IMR-90 (cell line): ENCODE measurements at regions of chr14 and their contacts with region 1.

Region 1: DNA sequence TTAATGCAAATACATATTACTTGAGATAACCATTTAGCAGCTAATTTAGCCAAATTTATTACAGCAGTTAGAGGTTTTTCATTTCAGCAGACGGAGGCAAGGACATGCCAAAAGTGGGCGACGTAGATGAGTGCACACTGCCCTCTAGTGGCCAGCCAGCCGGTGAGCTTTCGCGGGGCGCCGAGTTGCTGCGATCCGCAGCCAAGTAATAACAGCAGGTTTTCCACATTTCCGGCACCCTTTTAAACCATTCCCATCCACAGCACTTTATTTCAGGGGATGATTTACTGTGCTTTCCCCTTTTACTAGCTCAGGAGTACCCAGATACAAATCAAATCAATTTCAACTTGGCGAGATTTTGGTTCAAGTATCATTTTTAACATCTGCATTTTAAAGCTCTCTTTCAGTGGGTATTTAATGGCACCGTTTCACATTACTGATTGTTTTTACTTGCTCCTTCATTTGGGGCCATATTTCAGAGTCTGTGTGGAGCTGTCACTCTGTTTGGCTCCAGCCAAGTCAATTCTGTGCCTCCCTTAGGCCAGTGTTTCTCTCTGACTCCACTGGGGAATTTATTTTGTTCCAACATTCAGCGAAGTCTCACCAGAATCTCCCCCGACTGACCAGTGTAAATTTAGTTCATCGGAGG is 158.0 kb downstream of the EGLN3 start:
- DNase-seq: peak; percentile 66
- ATAC-seq: peak; percentile 87
- H3K4me3 ChIP-seq: no peak overlapping the region
- H3K27ac ChIP-seq: no peak overlapping the region
- H3K4me1 ChIP-seq: no peaks in the 10 kb centered on the region
- H3K27me3 ChIP-seq: no peaks in the 10 kb centered on the region; the same call in 1 of the 2 replicates
- CTCF ChIP-seq: peak; percentile 85
- POLR2A ChIP-seq: no peak
- RAD21 ChIP-seq: peak; percentile 80

Region 2: GRCh38 chr14:32588448-32589320 is 1204.2 kb before region 1 on chr14:
- CTCF ChIA-PET with region 1: interaction called, 9 read pairs
- POLR2A ChIA-PET with region 1: no interaction called
- dilution Hi-C with region 1: loop called (anchors 25 kb)
- in situ Hi-C with region 1: no loop called
- intact Hi-C with region 1: loop called (anchors 1 kb)
- DNase-seq: peak; percentile 65
- ATAC-seq: peak; percentile 81
- H3K4me3 ChIP-seq: no peak overlapping the region
- H3K27ac ChIP-seq: no peak overlapping the region
- H3K4me1 ChIP-seq: peaks cover 5% of the 10 kb centered on the region
- H3K27me3 ChIP-seq: no peaks in the 10 kb centered on the region
- CTCF ChIP-seq: peak; percentile 87
- POLR2A ChIP-seq: peak; percentile 45; the same call in 1 of the 2 replicates
- RAD21 ChIP-seq: peak; percentile 91

Region 3: GRCh38 chr14:32710731-32711680 is 1081.8 kb before region 1 on chr14:
- CTCF ChIA-PET with region 1: interaction called, 3 read pairs
- POLR2A ChIA-PET with region 1: interaction called, 7 read pairs
- dilution Hi-C with region 1: no loop called
- in situ Hi-C with region 1: no loop called
- intact Hi-C with region 1: loop called (anchors 2 kb)
- DNase-seq: peak; percentile 14
- ATAC-seq: peak; percentile 44; the same call in 1 of the 2 replicates
- H3K4me3 ChIP-seq: peak overlapping the region; percentile 32; the same call in 1 of the 2 replicates
- H3K27ac ChIP-seq: no peak overlapping the region
- H3K4me1 ChIP-seq: no peaks in the 10 kb centered on the region; the same call in 1 of the 2 replicates
- H3K27me3 ChIP-seq: no peaks in the 10 kb centered on the region
- CTCF ChIP-seq: peak; percentile 42
- POLR2A ChIP-seq: no peak
- RAD21 ChIP-seq: peak; percentile 41

Region 4: DNA sequence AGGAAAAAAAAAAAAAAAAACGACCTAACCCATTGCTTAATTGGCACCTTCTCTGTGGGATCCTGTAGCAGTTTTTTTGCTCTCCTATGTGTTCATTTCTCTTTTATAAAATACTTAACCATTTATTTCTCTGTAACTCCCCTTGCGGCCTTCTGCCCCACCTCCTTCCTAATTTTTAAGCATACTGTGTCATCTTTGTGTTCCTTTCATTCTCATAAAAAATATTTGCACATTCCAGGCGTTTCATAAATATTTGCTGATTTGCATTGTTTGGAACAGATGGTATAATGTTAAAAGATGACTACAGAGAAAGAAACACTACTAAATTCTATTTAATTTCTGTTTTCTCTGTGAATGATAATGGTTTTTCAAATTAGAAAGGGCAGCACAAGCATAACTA is 776.2 kb before region 1 on chr14:
- CTCF ChIA-PET with region 1: no interaction called
- POLR2A ChIA-PET with region 1: no interaction called
- dilution Hi-C with region 1: no loop called
- in situ Hi-C with region 1: no loop called
- intact Hi-C with region 1: loop called (anchors 10 kb)
- DNase-seq: no peak
- ATAC-seq: no peak
- H3K4me3 ChIP-seq: no peak overlapping the region
- H3K27ac ChIP-seq: no peak overlapping the region
- H3K4me1 ChIP-seq: no peaks in the 10 kb centered on the region
- H3K27me3 ChIP-seq: no peaks in the 10 kb centered on the region
- CTCF ChIP-seq: no peak
- POLR2A ChIP-seq: no peak
- RAD21 ChIP-seq: no peak

Region 5: GRCh38 chr14:33150666-33151428 is 642.0 kb before region 1 on chr14:
- CTCF ChIA-PET with region 1: no interaction called
- POLR2A ChIA-PET with region 1: no interaction called
- dilution Hi-C with region 1: no loop called
- in situ Hi-C with region 1: no loop called
- intact Hi-C with region 1: no loop called
- DNase-seq: no peak
- ATAC-seq: no peak
- H3K4me3 ChIP-seq: no peak overlapping the region
- H3K27ac ChIP-seq: no peak overlapping the region
- H3K4me1 ChIP-seq: no peaks in the 10 kb centered on the region
- H3K27me3 ChIP-seq: no peaks in the 10 kb centered on the region
- CTCF ChIP-seq: no peak
- POLR2A ChIP-seq: no peak
- RAD21 ChIP-seq: no peak

Region 6: DNA sequence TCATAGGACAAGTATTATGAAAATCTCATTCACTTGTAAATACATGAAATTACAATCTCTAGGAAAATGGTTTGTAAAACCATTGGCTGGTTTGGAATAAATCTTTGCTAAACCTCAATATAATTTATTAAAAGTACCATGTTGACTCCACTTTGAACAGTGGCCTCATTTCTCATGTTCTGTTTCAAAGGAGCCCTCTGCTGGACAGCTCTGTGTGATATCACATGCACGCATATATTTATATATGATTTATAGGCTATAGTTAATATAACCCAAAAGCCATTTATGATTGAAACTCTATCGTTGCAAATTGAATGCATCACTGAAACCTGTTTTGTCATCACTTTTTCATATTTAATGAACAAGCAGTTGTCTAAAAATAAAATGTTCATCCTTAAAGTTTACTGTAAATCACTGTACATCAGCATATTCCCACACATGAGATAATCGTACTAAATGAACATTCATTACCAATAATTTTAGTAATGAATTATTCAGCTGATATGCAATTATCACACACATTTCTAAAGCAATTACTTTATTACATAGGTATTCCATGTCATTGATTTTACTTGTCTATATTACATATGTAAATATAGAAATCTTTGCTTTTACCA is 360.3 kb before region 1 on chr14:
- CTCF ChIA-PET with region 1: no interaction called
- POLR2A ChIA-PET with region 1: no interaction called
- dilution Hi-C with region 1: no loop called
- in situ Hi-C with region 1: no loop called
- intact Hi-C with region 1: loop called (anchors 5 kb)
- DNase-seq: peak; percentile 18
- ATAC-seq: peak; percentile 68
- H3K4me3 ChIP-seq: no peak overlapping the region
- H3K27ac ChIP-seq: no peak overlapping the region
- H3K4me1 ChIP-seq: no peaks in the 10 kb centered on the region
- H3K27me3 ChIP-seq: no peaks in the 10 kb centered on the region
- CTCF ChIP-seq: peak; percentile 40
- POLR2A ChIP-seq: no peak
- RAD21 ChIP-seq: peak; percentile 20; the same call in 1 of the 2 replicates

Region 7: DNA sequence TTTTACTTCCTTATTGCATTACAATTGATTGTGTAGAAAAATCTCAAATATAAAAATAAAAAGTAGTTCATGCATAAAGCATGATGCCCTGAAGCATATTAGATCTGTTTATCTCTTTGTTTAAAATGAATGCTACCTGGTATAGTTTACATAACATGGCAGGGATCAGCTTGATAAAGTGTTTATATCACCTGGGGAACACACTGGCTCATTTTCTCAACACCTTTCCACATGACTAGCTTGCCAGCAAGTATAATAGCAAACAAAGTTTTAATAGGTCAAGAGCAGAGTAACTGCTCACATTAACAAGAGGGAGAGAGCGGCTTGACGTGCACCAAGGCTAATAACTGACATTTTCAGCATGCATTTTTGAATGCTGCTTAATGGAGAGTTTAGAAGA is 88.4 kb before region 1 on chr14:
- CTCF ChIA-PET with region 1: no interaction called
- POLR2A ChIA-PET with region 1: no interaction called
- dilution Hi-C with region 1: no loop called
- in situ Hi-C with region 1: no loop called
- intact Hi-C with region 1: no loop called
- DNase-seq: no peak
- ATAC-seq: no peak
- H3K4me3 ChIP-seq: no peak overlapping the region
- H3K27ac ChIP-seq: no peak overlapping the region
- H3K4me1 ChIP-seq: no peaks in the 10 kb centered on the region
- H3K27me3 ChIP-seq: no peaks in the 10 kb centered on the region
- CTCF ChIP-seq: no peak
- POLR2A ChIP-seq: no peak
- RAD21 ChIP-seq: no peak

Region 8: GRCh38 chr14:33756833-33757232 is 36.0 kb before region 1 on chr14:
- CTCF ChIA-PET with region 1: interaction called, 10 read pairs
- POLR2A ChIA-PET with region 1: no interaction called
- dilution Hi-C with region 1: no loop called
- in situ Hi-C with region 1: no loop called
- intact Hi-C with region 1: no loop called
- DNase-seq: no peak
- ATAC-seq: no peak
- H3K4me3 ChIP-seq: no peak overlapping the region
- H3K27ac ChIP-seq: no peak overlapping the region
- H3K4me1 ChIP-seq: no peaks in the 10 kb centered on the region
- H3K27me3 ChIP-seq: no peaks in the 10 kb centered on the region
- CTCF ChIP-seq: no peak
- POLR2A ChIP-seq: no peak
- RAD21 ChIP-seq: no peak

Region 9: DNA sequence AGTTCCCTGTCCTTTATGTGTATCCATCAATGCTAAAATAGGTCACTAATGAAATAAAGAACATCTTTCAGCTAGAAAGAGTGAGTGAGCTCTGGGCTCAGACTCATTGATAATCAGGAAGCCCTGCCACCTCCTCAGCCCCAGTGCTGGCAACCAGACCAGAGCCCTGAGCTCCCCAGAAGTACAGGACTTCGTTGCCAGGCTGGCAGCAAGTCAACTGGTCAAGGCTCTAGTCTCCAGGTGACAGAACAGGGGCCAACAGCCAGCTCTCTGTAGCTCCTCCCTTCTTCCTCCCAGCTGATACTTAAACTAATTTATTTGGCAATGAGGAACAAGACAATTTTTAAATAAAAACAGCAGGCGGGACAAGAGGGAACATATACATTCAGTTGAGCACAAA is 12.7 kb after region 1 on chr14:
- CTCF ChIA-PET with region 1: interaction called, 17 read pairs
- POLR2A ChIA-PET with region 1: no interaction called
- dilution Hi-C with region 1: no loop called
- in situ Hi-C with region 1: no loop called
- intact Hi-C with region 1: no loop called
- DNase-seq: no peak
- ATAC-seq: no peak
- H3K4me3 ChIP-seq: no peak overlapping the region
- H3K27ac ChIP-seq: no peak overlapping the region
- H3K4me1 ChIP-seq: no peaks in the 10 kb centered on the region
- H3K27me3 ChIP-seq: peaks cover 7% of the 10 kb centered on the region
- CTCF ChIP-seq: no peak
- POLR2A ChIP-seq: no peak
- RAD21 ChIP-seq: no peak

Region 10: DNA sequence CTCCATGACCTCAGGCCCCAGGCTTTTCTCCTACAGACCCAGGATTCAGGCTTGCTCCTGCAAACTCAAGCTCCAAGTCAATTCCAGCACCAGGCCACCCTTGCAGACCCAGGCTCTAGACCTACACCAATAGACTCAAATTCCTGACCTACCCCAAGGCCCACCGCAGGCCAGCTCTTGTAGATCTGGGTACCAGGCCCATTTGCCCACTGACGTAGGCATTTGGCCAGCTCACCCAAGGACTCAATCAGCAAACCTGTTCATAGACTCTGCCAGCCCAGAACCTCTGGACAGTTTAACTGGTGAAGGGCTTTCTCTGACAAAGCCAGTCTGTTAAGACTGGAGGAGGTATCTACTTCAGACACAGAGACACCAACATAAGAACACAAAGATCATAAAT is 616.9 kb after region 1 on chr14:
- CTCF ChIA-PET with region 1: no interaction called
- POLR2A ChIA-PET with region 1: no interaction called
- dilution Hi-C with region 1: no loop called
- in situ Hi-C with region 1: no loop called
- intact Hi-C with region 1: no loop called
- DNase-seq: no peak
- ATAC-seq: no peak
- H3K4me3 ChIP-seq: no peak overlapping the region
- H3K27ac ChIP-seq: no peak overlapping the region
- H3K4me1 ChIP-seq: no peaks in the 10 kb centered on the region
- H3K27me3 ChIP-seq: no peaks in the 10 kb centered on the region
- CTCF ChIP-seq: no peak
- POLR2A ChIP-seq: no peak
- RAD21 ChIP-seq: no peak